Sigmoid colon (tissue), 7 donors: ENCODE measurements at regions of chr12 and their contacts with region 1.

Region 1: GRCh38 chr12:104108755-104109445 is 29.1 kb downstream of the NFYB start:
- DNase-seq: peak; percentile 91
- H3K4me3 ChIP-seq: no peak overlapping the region
- H3K27ac ChIP-seq: peak overlapping the region in 1 of 4 donors; percentile 47
- H3K4me1 ChIP-seq: peaks cover 0 to 28% (median 10%) of the 10 kb centered on the region in 4 donors
- H3K27me3 ChIP-seq: no peaks in the 10 kb centered on the region
- CTCF ChIP-seq: peak in 3 of 4 experiments; percentile 77 to 85 (median 84)
- EP300 ChIP-seq: no peak
- POLR2A ChIP-seq: no peak

Region 2: GRCh38 chr12:103758310-103759089 is 350.4 kb before region 1 on chr12:
- intact Hi-C with region 1: no loop called
- DNase-seq: no peak
- H3K4me3 ChIP-seq: no peak overlapping the region
- H3K27ac ChIP-seq: peak overlapping the region in 3 of 4 donors; percentile 9 to 34 (median 32)
- H3K4me1 ChIP-seq: peaks cover 0 to 7% (median 0%) of the 10 kb centered on the region in 4 donors
- H3K27me3 ChIP-seq: no peaks in the 10 kb centered on the region
- CTCF ChIP-seq: no peak
- EP300 ChIP-seq: no peak
- POLR2A ChIP-seq: no peak

Region 3: DNA sequence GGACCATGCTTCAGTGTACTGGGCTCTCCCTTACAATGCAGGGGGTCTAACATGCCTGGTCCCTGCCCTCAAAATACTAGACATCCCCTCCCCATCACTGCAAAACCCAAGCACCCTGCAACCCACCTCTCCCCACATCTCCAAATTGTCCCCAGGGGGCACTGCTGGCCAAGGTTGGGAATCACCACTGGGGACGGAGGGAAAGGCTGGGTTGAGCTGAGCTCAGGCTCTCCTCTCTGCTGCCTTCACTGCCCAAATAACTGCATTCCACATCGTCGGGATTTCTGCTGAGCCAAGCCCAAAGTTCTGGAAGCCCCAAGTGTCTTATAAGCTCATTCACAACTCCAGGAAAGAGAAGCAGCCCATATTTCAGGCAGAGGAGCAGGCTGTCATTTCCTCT is 337.4 kb before region 1 on chr12:
- intact Hi-C with region 1: loop called (anchors 10 kb)
- DNase-seq: peak; percentile 68
- H3K4me3 ChIP-seq: no peak overlapping the region
- H3K27ac ChIP-seq: peak overlapping the region in 3 of 4 donors; percentile 20 to 56 (median 52)
- H3K4me1 ChIP-seq: peaks cover 0 to 49% (median 37%) of the 10 kb centered on the region in 4 donors
- H3K27me3 ChIP-seq: no peaks in the 10 kb centered on the region
- CTCF ChIP-seq: peak in 1 of 4 experiments; percentile 30
- EP300 ChIP-seq: no peak
- POLR2A ChIP-seq: no peak

Region 4: DNA sequence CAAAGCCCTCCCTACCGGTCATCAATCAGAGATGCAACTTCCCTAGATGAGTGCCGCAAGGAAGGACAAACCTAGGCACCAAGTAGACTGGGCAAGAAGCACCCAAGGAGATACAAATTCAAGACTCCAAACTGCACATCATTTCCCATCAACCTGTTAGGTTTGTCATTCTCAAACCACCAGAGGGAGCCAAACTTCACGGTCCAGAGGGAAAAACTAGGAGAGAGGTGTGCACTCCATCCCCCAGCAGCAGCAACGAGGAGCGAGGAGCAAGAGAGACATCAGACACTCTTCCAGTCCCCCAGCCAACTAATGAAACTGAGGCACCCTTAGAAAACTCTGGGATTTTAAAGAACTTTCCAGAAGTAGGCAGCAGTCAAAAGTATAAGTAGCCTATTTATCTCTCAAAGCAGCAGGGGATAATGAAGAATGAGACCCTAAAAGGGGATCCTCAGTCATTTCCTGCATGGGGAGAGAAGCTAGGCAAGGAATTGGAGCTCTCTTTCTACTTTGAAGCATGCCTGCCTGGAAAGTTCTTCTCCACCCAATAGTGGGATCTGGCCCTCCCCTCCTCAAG is 230.9 kb before region 1 on chr12:
- intact Hi-C with region 1: loop called (anchors 5 kb)
- DNase-seq: peak; percentile 78
- H3K4me3 ChIP-seq: no peak overlapping the region
- H3K27ac ChIP-seq: no peak overlapping the region
- H3K4me1 ChIP-seq: peaks cover 0 to 5% (median 0%) of the 10 kb centered on the region in 4 donors
- H3K27me3 ChIP-seq: no peaks in the 10 kb centered on the region
- CTCF ChIP-seq: peak; percentile 51 to 64 (median 60)
- EP300 ChIP-seq: no peak
- POLR2A ChIP-seq: no peak

Region 5: GRCh38 chr12:103944964-103945363 is 163.9 kb before region 1 on chr12:
- intact Hi-C with region 1: loop called (anchors 5 kb)
- DNase-seq: no peak
- H3K4me3 ChIP-seq: no peak overlapping the region
- H3K27ac ChIP-seq: no peak overlapping the region
- H3K4me1 ChIP-seq: no peaks in the 10 kb centered on the region
- H3K27me3 ChIP-seq: no peaks in the 10 kb centered on the region
- CTCF ChIP-seq: no peak
- EP300 ChIP-seq: no peak
- POLR2A ChIP-seq: no peak

Region 6: DNA sequence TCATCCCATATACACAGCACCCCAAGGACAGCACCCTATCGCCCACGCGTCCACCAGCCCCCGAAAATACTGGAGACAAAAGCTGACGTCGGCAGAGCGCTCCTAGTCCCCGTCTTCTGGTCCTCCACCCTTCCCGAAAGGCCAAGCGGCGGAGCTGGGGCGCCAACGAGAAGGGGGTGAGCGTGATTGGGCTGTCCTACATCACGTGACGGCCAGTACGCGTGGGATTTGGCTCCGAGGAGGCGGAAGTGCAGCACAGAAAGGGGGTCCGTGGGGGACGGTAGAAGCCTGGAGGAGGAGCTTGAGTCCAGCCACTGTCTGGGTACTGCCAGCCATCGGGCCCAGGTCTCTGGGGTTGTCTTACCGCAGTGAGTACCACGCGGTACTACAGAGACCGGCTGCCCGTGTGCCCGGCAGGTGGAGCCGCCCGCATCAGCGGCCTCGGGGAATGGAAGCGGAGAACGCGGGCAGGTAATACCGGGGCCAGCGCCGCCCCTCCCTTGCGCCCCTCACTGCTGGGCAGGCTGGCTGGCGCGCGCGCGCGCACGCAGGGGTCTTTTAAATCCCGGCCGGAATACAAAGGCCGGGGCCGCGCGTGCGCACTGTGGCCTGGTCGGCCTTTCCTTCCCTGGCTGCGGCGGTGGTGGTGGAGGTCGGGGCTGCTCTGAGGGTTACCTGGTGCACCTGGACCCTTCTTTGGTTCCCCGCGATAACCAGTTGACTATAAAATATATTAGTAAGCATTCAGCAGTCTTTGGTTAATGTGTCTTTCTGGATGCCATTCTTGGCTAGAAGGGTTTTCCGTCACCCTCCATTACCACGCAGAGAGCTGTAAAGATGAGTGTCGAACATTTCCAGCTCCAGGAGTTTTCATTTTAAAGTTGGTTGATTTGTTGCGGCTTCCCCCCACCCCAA is 143.1 kb before region 1 on chr12 and contains the start of gene TDG:
- intact Hi-C with region 1: loop called (anchors 5 kb)
- DNase-seq: peak; percentile 99
- H3K4me3 ChIP-seq: peak within 1 kb of the TSS; percentile 67 to 83 (median 73)
- H3K27ac ChIP-seq: peak within 1 kb of the TSS; percentile 92 to 97 (median 94)
- H3K4me1 ChIP-seq: peaks cover 0 to 59% (median 48%) of the 10 kb centered on the region in 4 donors
- H3K27me3 ChIP-seq: no peaks in the 10 kb centered on the region
- CTCF ChIP-seq: no peak
- EP300 ChIP-seq: peak in 1 of 4 donors; percentile 75
- POLR2A ChIP-seq: peak; percentile 83 to 89
- total RNA-seq, gene TDG: 12.8 to 24.1 (median 21.9) TPM

Region 7: DNA sequence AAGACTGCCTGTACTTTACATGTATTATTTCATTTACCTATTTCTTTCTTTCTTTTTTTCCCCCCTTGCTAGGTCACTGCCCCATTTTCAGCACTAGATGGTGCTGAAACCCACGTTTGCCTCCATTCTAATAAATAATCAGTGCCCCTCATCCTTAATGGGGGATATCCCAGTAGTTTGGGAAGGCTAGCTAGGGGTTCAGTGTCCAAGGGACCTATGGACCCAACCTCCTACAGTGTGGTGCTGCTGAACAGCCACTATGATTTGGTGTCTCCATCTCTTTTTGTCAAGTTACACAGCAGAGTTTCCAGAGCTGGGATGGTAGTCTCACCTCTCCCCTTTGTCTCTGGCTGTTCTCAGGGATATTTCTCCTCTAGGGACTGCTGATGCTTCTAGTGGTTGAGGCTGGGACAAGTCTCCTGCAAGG is 51.1 kb before region 1 on chr12:
- intact Hi-C with region 1: loop called (anchors 2 kb)
- DNase-seq: no peak
- H3K4me3 ChIP-seq: no peak overlapping the region
- H3K27ac ChIP-seq: no peak overlapping the region
- H3K4me1 ChIP-seq: peaks cover 0 to 36% (median 22%) of the 10 kb centered on the region in 4 donors
- H3K27me3 ChIP-seq: no peaks in the 10 kb centered on the region
- CTCF ChIP-seq: peak; percentile 38 to 58 (median 46)
- EP300 ChIP-seq: no peak
- POLR2A ChIP-seq: no peak

Region 8: DNA sequence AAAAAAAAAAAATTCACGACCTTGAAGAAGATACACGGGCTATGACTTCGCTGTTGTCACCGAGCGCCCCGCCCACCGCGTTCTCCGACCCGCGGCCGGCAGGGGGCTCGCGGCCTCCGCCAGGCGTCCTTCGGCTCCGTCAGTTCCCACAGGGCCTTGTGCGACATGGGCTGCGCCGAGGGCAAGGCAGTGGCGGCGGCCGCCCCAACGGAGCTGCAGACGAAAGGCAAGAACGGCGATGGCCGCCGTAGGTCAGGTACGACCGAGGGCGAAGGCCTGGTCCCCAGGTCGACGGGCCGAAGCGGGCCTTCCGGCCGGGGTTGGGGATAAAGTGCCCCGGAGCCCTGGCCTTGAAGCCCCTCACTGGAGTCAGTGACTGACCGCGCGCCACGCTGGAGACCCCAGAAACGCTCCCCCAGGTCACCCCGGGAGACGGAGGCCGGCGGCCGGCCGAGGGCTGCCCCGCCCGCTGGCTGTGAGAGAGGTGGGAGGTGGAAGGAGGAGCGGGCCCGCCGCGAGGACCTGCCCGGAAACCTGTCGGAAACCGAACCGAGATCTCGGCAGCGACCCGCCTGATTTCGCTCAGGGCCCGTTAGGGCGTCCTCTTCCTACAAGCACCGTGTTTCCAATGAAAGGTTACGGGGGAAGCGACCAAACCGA is 106.9 kb after region 1 on chr12 and contains the start of gene TXNRD1:
- intact Hi-C with region 1: no loop called
- DNase-seq: peak; percentile 92
- H3K4me3 ChIP-seq: peak within 1 kb of the TSS; percentile 55 to 65 (median 64)
- H3K27ac ChIP-seq: peak within 1 kb of the TSS; percentile 84 to 89 (median 86)
- H3K4me1 ChIP-seq: peaks cover 0 to 34% (median 29%) of the 10 kb centered on the region in 4 donors
- H3K27me3 ChIP-seq: no peaks in the 10 kb centered on the region
- CTCF ChIP-seq: peak; percentile 73 to 95 (median 88)
- EP300 ChIP-seq: peak in 1 of 4 donors; percentile 18
- POLR2A ChIP-seq: peak in 1 of 2 donors; percentile 62
- total RNA-seq, gene TXNRD1: 121 to 188 (median 143) TPM